Natural killer cell (primary cell): ENCODE measurements at regions of chr16 and their contacts with region 1.

Region 1: DNA sequence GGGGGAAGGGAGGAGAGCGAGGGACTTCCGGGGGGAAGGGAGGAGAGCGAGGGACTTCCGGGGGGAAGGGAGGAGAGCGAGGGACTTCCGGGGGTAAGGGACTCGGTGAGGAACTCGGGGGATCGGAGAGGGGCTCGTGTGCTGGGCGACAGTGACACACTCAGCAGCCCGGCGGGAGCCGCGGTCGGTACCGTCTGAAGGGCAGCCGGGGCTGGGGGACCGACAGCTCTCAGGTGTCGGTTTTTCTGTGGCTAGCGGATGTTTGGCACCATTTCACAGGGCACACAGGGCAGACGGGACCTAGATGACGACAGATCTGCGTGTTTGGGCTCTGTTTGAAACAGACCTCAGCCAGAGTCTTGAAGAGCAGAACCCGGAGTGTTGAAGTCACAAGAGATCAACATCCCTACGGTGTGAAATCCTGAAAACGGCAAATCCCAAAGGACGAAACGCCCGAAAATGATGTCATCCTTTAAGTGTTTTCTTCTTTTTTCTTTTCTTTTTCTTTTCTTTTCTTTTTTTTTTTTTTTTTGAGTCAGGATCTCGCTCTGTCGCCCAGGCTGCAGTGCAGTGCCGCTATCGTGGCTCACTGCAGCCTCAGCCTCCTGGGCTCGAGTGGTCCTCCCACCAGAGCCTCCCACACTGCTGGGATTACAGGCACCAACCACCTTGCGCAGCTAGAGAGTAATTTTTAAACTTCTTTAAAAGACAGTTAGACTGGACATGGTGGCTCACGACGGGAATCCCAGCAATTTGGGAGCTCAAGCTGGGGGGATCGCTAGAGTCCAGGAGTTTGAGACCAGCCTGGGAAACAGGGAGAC is 23.9 kb downstream of the ZNF778 start:
- DNase-seq: peak; percentile 81 to 94
- ATAC-seq: peak; percentile 79 to 90 (median 81)
- H3K4me3 ChIP-seq: peak overlapping the region; percentile 84
- H3K4me3 Mint-ChIP-seq: peak overlapping the region; percentile 95
- H3K27ac ChIP-seq: peak overlapping the region; percentile 99
- H3K27ac Mint-ChIP-seq: peak overlapping the region; percentile 95 to 96
- H3K4me1 ChIP-seq: peaks cover 19% of the 10 kb centered on the region
- H3K4me1 Mint-ChIP-seq: peaks cover 4 to 30% of the 10 kb centered on the region in 2 donors
- H3K27me3 ChIP-seq: no peaks in the 10 kb centered on the region
- H3K27me3 Mint-ChIP-seq: no peaks in the 10 kb centered on the region
- CTCF ChIP-seq: no peak

Region 2: GRCh38 chr16:89289428-89290395 is 48.3 kb after region 1 on chr16:
- intact Hi-C with region 1: loop called (anchors 2 kb)
- DNase-seq: peak; percentile 61 to 80
- ATAC-seq: peak; percentile 84 to 92 (median 92)
- H3K4me3 ChIP-seq: no peak overlapping the region
- H3K4me3 Mint-ChIP-seq: no peak overlapping the region
- H3K27ac ChIP-seq: no peak overlapping the region
- H3K27ac Mint-ChIP-seq: peak overlapping the region; percentile 62 to 70
- H3K4me1 ChIP-seq: peaks cover 13% of the 10 kb centered on the region
- H3K4me1 Mint-ChIP-seq: peaks cover 13 to 32% of the 10 kb centered on the region in 2 donors
- H3K27me3 ChIP-seq: no peaks in the 10 kb centered on the region
- H3K27me3 Mint-ChIP-seq: no peaks in the 10 kb centered on the region
- CTCF ChIP-seq: peak; percentile 82

Region 3: DNA sequence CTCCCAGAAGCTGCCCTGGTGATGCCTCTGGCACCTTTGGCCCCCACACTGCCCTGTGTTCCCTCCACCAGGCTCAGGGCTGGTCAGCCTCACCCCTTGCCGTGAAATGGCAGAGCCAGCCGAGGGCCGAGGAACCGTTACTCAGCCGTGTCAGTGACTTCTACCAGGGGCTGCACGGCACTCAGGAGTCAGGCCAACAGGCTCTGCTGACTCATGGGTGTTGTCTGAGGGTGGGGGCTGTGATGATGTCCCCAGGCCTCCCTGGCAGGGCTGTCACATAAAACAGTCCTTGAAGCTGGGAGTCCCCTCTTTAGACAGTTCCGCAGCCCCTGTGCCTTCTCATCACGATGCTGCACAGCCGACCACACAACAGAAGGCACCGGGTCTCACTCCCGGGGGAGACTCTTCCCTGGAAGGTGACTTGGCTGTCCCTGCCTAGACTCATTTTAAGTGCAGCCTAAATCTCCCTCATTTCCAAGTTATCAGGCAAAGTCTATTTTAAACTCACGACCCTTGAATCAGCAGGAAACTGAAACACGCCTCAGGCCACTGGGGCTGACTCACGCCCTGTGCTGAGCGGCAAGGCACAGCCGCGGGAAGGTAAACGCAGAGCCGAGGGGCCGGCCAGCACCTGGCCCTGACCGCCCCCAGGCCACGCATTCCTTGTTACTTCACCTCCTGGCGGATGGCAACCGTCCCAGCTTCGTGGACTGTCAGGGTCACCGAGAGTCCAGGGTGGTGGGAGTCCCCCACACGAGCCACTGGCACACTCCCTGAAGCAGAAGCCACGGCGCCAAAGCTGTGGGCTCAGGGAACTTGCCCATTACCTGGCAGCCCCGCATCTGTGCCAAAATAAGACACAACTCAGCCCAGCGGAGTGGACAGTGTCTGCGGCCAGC is 78.7 kb after region 1 on chr16:
- intact Hi-C with region 1: loop called (anchors 10 kb)
- DNase-seq: peak in 1 of 2 donors; percentile 49
- ATAC-seq: peak in 2 of 3 donors; percentile 24 to 36
- H3K4me3 ChIP-seq: no peak overlapping the region
- H3K4me3 Mint-ChIP-seq: peak overlapping the region; percentile 80
- H3K27ac ChIP-seq: no peak overlapping the region
- H3K27ac Mint-ChIP-seq: peak overlapping the region; percentile 70 to 98
- H3K4me1 ChIP-seq: peaks cover 97% of the 10 kb centered on the region
- H3K4me1 Mint-ChIP-seq: peaks cover 79 to 85% of the 10 kb centered on the region in 2 donors
- H3K27me3 ChIP-seq: no peaks in the 10 kb centered on the region
- H3K27me3 Mint-ChIP-seq: no peaks in the 10 kb centered on the region
- CTCF ChIP-seq: no peak